Natural killer cell (primary cell): ENCODE measurements at regions of chr4 and their contacts with region 1.

Region 1: GRCh38 chr4:111330786-111331185 is 707.9 kb upstream of the PITX2 start:
- DNase-seq: no peak
- ATAC-seq: no peak
- H3K4me3 ChIP-seq: no peak overlapping the region
- H3K4me3 Mint-ChIP-seq: no peak overlapping the region
- H3K27ac ChIP-seq: no peak overlapping the region
- H3K27ac Mint-ChIP-seq: no peak overlapping the region
- H3K4me1 ChIP-seq: no peaks in the 10 kb centered on the region
- H3K4me1 Mint-ChIP-seq: no peaks in the 10 kb centered on the region
- H3K27me3 ChIP-seq: no peaks in the 10 kb centered on the region
- H3K27me3 Mint-ChIP-seq: no peaks in the 10 kb centered on the region
- CTCF ChIP-seq: no peak

Region 2: DNA sequence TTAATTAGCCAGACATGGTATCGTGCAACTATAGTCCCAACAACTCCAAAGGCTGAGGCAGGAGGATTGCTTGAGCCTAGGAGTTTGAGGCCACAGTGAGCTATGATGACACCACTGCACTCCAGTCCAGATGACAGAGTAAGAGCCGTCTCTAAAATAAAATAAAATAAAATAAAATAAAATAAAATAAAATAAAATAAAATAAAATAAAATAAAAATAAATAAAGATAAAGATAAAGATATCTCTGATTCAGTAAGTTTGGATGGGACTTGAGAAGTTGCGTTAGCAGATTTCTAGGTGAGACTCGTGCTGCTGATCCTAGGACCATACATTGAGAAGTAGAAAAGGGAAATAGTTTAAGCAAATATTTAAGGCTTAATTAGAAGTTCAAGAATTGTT is 559.6 kb after region 1 on chr4:
- intact Hi-C with region 1: loop called (anchors 10 kb)
- DNase-seq: no peak
- ATAC-seq: no peak
- H3K4me3 ChIP-seq: no peak overlapping the region
- H3K4me3 Mint-ChIP-seq: no peak overlapping the region
- H3K27ac ChIP-seq: no peak overlapping the region
- H3K27ac Mint-ChIP-seq: no peak overlapping the region
- H3K4me1 ChIP-seq: no peaks in the 10 kb centered on the region
- H3K4me1 Mint-ChIP-seq: no peaks in the 10 kb centered on the region
- H3K27me3 ChIP-seq: no peaks in the 10 kb centered on the region
- H3K27me3 Mint-ChIP-seq: no peaks in the 10 kb centered on the region
- CTCF ChIP-seq: no peak